Activated CD4-positive, alpha-beta T cell treated with anti-CD3 and anti-CD28 coated beads, Interleukin-2, amount 10 ng/mL, durations not matched to agents 7 days and 5 days (primary cell): ENCODE measurements at regions of chr6 and their contacts with region 1.

Region 1: GRCh38 chr6:28355743-28356665 is 6.3 kb downstream of the ZKSCAN3 start:
- DNase-seq: peak; percentile 81
- H3K4me3 Mint-ChIP-seq: peak overlapping the region; percentile 85
- H3K27ac Mint-ChIP-seq: peak overlapping the region; percentile 83
- H3K4me1 Mint-ChIP-seq: peaks cover 34% of the 10 kb centered on the region
- H3K27me3 Mint-ChIP-seq: no peaks in the 10 kb centered on the region

Region 2: GRCh38 chr6:27847706-27848105 is 508.3 kb before region 1 on chr6:
- CTCF ChIA-PET with region 1: no interaction called
- POLR2A ChIA-PET with region 1: no interaction called
- DNase-seq: no peak
- H3K4me3 Mint-ChIP-seq: no peak overlapping the region
- H3K27ac Mint-ChIP-seq: no peak overlapping the region
- H3K4me1 Mint-ChIP-seq: no peaks in the 10 kb centered on the region
- H3K27me3 Mint-ChIP-seq: peaks cover 14% of the 10 kb centered on the region

Region 3: DNA sequence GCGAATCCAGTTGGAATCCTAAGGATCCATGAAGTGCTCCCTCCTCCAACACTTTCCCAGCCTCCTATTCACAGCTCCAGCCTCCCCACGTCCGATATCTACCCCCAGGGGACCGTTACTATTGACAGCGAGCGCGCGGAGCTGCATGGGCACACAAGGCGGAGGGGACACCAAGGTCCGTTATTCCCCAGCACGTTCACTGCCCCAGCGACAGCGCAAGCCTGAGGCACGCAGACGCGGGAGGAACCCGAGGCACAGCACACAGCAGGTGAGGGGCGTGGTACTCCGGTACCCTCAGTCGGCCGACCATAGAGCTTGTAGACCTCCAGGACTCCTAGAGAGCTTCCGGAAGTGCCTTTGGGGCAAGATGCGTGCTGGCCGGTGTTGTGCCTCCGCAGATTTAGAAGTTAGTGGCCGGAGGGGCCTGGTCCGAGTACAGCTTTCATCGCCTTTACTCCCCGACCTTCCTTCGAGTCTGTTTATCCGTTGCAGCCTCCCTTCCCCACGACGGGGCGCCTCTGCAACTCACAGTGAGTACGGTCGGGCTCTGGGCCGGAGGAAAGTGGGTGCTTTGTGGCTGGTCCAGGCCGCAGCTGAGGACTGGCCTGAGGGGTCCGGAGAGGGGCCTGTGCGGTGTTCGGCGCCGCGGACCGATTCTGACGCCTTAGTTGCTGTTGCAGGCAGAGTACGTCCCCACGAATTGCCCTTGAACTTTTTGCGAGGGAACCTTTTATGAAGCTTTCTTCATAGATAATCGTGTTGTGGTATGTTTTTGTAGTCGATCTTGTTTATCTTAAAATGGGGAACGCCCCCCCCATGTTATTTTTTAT is 214.3 kb before region 1 on chr6 and contains the start of gene ZKSCAN8:
- CTCF ChIA-PET with region 1: interaction called, 15 read pairs
- POLR2A ChIA-PET with region 1: no interaction called
- DNase-seq: peak; percentile 82
- H3K4me3 Mint-ChIP-seq: peak within 1 kb of the TSS; percentile 98
- H3K27ac Mint-ChIP-seq: peak within 1 kb of the TSS; percentile 96
- H3K4me1 Mint-ChIP-seq: peaks cover 63% of the 10 kb centered on the region
- H3K27me3 Mint-ChIP-seq: no peaks in the 10 kb centered on the region
- total RNA-seq, gene ZKSCAN8: 18.6 to 22.2 TPM

Region 4: DNA sequence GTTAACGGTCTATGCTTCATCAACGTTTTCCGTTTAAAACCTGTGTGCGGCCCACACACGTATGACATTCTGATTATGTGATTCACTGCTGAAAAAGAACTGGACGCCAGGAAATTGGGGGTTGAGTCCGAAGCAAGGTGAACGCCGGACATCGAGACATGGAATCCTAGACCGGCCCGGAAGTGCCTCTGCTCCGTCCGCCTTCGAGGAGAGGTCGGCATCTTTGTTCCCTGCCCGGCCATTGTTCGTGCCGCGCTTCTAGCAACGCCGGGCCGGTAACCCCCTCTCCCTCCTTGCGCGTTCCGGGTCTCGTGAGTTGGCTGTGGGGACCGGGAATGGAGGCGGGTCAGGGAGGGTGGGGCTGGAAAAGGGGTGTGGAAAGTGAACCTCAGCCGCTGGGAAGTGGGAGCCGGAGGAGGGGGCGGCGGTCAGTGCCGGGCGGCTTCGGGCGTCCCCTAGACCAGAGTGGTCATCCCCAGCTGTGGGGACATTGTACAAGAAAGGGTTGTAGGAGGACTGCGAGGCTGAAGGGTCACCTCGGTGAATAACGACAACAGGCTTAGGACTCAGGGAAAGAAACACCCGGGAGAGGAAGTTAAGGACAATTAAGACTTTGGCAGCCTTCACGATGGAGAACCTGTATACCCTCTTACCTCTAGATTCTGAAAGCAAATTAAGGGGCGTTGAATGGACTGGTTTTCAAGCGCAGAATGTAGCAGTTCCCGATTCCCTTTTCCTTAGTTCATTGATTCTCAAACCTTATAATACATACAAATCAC is 130.8 kb before region 1 on chr6 and contains the start of gene ZSCAN9:
- CTCF ChIA-PET with region 1: no interaction called
- POLR2A ChIA-PET with region 1: no interaction called
- DNase-seq: peak; percentile 25
- H3K4me3 Mint-ChIP-seq: peak within 1 kb of the TSS; percentile 79
- H3K27ac Mint-ChIP-seq: peak within 1 kb of the TSS; percentile 81
- H3K4me1 Mint-ChIP-seq: peaks cover 36% of the 10 kb centered on the region
- H3K27me3 Mint-ChIP-seq: peaks cover 42% of the 10 kb centered on the region
- total RNA-seq, gene ZSCAN9: 1.5 to 1.6 TPM

Region 5: DNA sequence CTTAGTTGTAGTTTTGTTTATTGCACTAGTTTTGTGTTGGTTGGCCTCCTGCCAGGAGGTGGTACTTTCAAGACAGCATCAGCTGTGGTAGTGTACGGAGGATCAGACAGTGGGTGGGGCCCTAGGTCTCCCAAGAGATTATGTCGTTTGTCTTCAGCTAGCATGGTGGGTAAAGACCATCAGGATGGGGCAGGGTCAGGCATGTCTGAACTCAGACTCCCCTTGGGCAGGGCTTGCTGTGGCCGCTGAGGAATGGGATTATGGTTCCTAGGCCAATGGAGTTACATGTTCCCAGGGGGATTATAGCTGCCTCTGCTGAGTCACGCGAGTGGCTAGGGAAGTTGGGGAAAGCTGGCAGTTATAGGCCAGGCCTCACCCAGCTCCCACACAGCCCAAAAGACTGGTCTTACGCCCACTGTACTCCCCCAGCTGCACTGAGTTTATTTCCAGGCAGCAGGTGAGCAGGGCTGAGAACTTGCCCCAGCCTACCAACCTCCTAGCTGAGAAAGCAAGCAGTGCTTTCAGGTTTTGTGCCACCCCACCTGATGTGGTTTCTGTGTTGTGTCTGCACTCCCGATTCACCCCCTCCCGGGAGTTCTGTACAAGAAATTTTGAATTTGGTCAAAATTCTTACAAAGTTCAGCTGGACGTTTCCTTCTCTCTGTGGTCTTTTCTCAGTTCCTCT is 44.7 kb before region 1 on chr6:
- CTCF ChIA-PET with region 1: no interaction called
- POLR2A ChIA-PET with region 1: no interaction called
- DNase-seq: no peak
- H3K4me3 Mint-ChIP-seq: no peak overlapping the region
- H3K27ac Mint-ChIP-seq: no peak overlapping the region
- H3K4me1 Mint-ChIP-seq: no peaks in the 10 kb centered on the region
- H3K27me3 Mint-ChIP-seq: peaks cover 24% of the 10 kb centered on the region

Region 6: DNA sequence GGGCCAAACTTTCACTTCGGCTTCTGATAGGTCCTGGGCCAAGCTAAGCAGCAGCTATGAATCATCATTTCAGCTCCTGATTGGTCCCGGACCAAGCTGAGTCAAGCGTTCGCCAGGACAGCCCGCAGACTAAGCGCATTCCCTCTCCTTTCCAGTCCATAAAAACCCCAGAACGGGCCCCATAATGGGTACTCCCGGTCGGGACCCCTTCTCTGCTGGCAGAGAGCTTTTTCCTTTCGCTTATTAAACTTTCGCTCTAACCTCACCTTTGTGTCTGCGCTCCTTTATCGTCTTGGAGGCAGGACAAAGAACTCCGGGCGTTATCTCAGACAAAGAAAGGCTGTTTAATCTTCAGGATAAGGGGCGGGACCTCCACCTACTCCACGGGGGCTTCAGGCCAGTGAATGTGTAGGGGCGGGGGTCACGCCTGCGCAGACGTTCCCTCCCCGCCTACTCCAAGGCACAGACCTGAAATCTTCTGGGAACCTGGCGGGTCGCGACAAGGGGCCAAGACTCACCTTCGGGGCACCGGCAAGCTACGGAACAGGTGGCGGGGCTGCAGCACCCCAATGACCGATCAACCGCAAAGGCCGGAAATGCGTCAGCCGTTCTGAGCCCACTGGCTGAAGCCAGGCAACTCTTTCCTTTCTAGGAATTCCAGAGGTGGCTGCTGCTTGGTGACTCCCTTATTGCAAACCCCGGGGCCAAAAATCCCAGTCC is 20.3 kb before region 1 on chr6 and contains the start of gene ZSCAN31:
- CTCF ChIA-PET with region 1: interaction called, 20 read pairs
- POLR2A ChIA-PET with region 1: no interaction called
- DNase-seq: peak; percentile 62
- H3K4me3 Mint-ChIP-seq: no peak within 1 kb of the TSS
- H3K27ac Mint-ChIP-seq: no peak within 1 kb of the TSS
- H3K4me1 Mint-ChIP-seq: peaks cover 2% of the 10 kb centered on the region
- H3K27me3 Mint-ChIP-seq: peaks cover 7% of the 10 kb centered on the region
- total RNA-seq, gene ZSCAN31: 0.37 to 0.56 TPM

Region 7: GRCh38 chr6:28478518-28478917 is 122.5 kb after region 1 on chr6:
- CTCF ChIA-PET with region 1: no interaction called
- POLR2A ChIA-PET with region 1: no interaction called
- DNase-seq: no peak
- H3K4me3 Mint-ChIP-seq: no peak overlapping the region
- H3K27ac Mint-ChIP-seq: no peak overlapping the region
- H3K4me1 Mint-ChIP-seq: peaks cover 12% of the 10 kb centered on the region
- H3K27me3 Mint-ChIP-seq: peaks cover 82% of the 10 kb centered on the region